Activated CD4-positive, alpha-beta memory T cell treated with anti-CD3 and anti-CD28 coated beads for 36 hours (primary cell): ENCODE measurements at regions of chr22 and their contacts with region 1.

Region 1: GRCh38 chr22:17084554-17085276 is at the start of gene IL17RA:
- DNase-seq: peak; percentile 96
- H3K4me3 Mint-ChIP-seq: peak within 1 kb of the TSS; percentile 79
- H3K27ac Mint-ChIP-seq: peak within 1 kb of the TSS; percentile 84
- H3K4me1 Mint-ChIP-seq: peaks cover 45% of the 10 kb centered on the region
- H3K27me3 Mint-ChIP-seq: no peaks in the 10 kb centered on the region
- total RNA-seq, gene IL17RA: 12.5 to 14.7 TPM

Region 2: DNA sequence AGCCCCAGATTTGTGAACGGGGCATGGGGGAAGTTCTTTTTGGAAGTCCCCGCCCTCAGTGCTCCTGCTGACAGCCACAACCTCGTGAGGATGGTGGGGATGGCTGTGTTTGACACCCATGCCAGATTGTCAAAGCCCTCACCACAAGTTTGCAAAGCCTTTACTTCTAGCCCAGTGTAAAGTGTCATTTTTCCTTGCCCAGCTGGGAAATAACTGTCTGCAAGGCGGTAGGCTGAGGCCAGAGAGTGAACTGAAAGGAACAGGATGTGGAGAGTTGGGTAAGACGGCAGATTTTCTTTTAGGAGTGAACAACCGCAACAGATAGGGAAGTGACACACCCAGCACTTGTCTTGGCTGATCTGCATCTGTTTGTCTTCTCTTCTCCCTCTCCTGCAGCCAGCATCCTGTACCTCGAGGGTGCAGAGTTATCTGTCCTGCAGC is 13.7 kb after region 1 on chr22:
- CTCF ChIA-PET with region 1: no interaction called
- POLR2A ChIA-PET with region 1: interaction called, 5 read pairs
- intact Hi-C with region 1: loop called (anchors 1 kb)
- DNase-seq: peak; percentile 44
- H3K4me3 Mint-ChIP-seq: no peak overlapping the region
- H3K27ac Mint-ChIP-seq: peak overlapping the region; percentile 25
- H3K4me1 Mint-ChIP-seq: peaks cover 62% of the 10 kb centered on the region
- H3K27me3 Mint-ChIP-seq: no peaks in the 10 kb centered on the region

Region 3: DNA sequence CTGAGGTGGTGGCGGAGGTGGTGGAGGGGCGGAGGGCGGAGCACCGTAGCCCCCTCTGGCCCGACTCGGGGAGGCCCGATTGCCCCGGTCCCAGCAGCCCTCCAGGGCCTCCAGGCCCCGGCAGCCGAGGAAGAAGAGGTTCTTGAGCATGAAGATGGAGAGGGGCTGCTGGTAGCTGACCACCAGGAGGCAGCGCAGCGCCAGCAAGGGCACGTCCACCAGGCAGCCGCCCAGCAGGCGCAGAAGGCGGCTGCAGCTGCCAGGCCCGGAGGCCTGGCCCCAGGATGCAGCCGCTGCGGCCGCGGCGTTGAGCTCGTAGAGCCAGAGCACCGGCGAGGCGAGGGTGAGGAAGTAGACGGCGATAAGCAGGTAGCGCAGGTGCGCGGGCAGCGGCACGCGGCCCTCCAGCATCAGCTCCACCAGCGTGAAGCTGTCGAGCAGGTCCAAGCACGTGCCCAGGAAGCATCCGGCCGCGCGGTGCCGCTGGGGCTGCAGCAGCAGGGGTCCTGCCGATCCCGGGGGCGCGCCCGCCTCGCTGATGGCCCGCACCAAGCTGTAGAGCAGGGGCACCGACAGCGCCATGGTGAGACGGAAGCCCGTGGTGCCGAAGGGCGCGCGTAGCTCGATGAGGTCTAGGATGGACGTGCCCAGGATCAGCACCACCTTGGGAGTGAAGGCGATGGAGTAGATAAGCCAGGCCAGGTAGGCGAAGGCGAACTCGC is 34.9 kb after region 1 on chr22:
- CTCF ChIA-PET with region 1: interaction called, 5 read pairs
- POLR2A ChIA-PET with region 1: no interaction called
- intact Hi-C with region 1: loop called (anchors 2 kb)
- DNase-seq: peak; percentile 41
- H3K4me3 Mint-ChIP-seq: no peak overlapping the region
- H3K27ac Mint-ChIP-seq: no peak overlapping the region
- H3K4me1 Mint-ChIP-seq: peaks cover 44% of the 10 kb centered on the region
- H3K27me3 Mint-ChIP-seq: peaks cover 10% of the 10 kb centered on the region

Region 4: GRCh38 chr22:17143826-17144225 is 59.1 kb after region 1 on chr22:
- CTCF ChIA-PET with region 1: no interaction called
- POLR2A ChIA-PET with region 1: no interaction called
- intact Hi-C with region 1: no loop called
- DNase-seq: no peak
- H3K4me3 Mint-ChIP-seq: no peak overlapping the region
- H3K27ac Mint-ChIP-seq: no peak overlapping the region
- H3K4me1 Mint-ChIP-seq: no peaks in the 10 kb centered on the region
- H3K27me3 Mint-ChIP-seq: no peaks in the 10 kb centered on the region

Region 5: DNA sequence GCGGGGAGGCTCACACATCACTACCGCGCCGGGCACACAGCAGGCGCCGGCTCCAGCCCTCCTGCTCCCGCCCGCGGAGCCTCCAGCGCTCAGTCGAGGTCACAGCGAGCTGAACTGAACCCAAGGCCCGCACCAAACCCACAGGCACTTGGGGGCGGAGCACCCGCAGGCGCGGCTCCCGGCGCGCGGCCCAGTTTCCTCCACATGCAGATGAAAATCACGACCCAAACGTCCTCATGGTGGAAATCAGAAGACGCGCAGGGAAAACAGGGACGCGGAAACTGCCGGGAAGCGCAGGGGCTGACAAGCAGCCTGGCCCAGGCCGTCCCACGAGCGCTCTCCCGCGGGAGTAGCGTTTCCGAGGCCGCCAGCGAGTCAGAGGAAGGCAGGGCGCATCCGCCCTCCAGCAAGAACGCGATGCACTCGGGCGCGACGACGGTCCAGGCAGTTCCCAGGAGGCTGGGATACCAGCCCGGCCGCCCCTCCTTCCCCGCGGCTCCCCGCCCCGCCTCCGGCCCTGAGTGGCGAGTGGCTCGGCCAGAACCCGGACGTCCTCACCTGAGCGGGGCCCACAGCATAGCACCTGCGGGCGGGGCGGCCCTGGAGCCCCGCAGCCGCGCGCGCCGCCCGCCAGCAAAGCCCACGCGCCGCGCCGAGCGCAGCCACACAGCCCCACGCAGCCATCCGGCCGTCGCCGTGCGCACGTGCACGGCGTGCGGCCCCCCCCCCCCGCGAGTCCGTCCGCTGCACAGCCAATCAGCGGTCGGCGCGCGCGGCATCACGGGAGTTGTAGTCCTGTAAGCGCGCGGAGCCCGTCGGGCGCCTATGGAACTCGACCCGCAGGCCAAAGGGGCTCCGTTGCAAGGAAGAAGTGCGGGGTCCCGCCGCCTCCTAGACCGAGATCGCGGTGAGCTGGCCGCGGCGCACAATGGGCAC is 74.1 kb after region 1 on chr22 and contains the start of gene HDHD5:
- CTCF ChIA-PET with region 1: interaction called, 3 read pairs
- POLR2A ChIA-PET with region 1: interaction called, 5 read pairs
- intact Hi-C with region 1: loop called (anchors 1 kb)
- DNase-seq: peak; percentile 91
- H3K4me3 Mint-ChIP-seq: peak within 1 kb of the TSS; percentile 80
- H3K27ac Mint-ChIP-seq: peak within 1 kb of the TSS; percentile 84
- H3K4me1 Mint-ChIP-seq: peaks cover 30% of the 10 kb centered on the region
- H3K27me3 Mint-ChIP-seq: no peaks in the 10 kb centered on the region
- total RNA-seq, gene HDHD5: 42.2 to 42.9 TPM

Region 6: GRCh38 chr22:17628304-17629166 is 543.8 kb after region 1 on chr22 and contains the start of gene ATP6V1E1:
- CTCF ChIA-PET with region 1: no interaction called
- POLR2A ChIA-PET with region 1: no interaction called
- intact Hi-C with region 1: loop called (anchors 5 kb)
- DNase-seq: peak; percentile 98
- H3K4me3 Mint-ChIP-seq: peak within 1 kb of the TSS; percentile 94
- H3K27ac Mint-ChIP-seq: peak within 1 kb of the TSS; percentile 79
- H3K4me1 Mint-ChIP-seq: peaks cover 29% of the 10 kb centered on the region
- H3K27me3 Mint-ChIP-seq: no peaks in the 10 kb centered on the region
- total RNA-seq, gene ATP6V1E1: 95.5 to 97.9 TPM

Region 7: GRCh38 chr22:17773606-17774205 is 689.0 kb after region 1 on chr22:
- CTCF ChIA-PET with region 1: no interaction called
- POLR2A ChIA-PET with region 1: no interaction called
- intact Hi-C with region 1: loop called (anchors 10 kb)
- DNase-seq: peak; percentile 82
- H3K4me3 Mint-ChIP-seq: peak overlapping the region; percentile 76
- H3K27ac Mint-ChIP-seq: no peak overlapping the region
- H3K4me1 Mint-ChIP-seq: peaks cover 60% of the 10 kb centered on the region
- H3K27me3 Mint-ChIP-seq: peaks cover 7% of the 10 kb centered on the region